ENCODE measurements at regions of chr2 and their contacts with region 1.

Region 1: DNA sequence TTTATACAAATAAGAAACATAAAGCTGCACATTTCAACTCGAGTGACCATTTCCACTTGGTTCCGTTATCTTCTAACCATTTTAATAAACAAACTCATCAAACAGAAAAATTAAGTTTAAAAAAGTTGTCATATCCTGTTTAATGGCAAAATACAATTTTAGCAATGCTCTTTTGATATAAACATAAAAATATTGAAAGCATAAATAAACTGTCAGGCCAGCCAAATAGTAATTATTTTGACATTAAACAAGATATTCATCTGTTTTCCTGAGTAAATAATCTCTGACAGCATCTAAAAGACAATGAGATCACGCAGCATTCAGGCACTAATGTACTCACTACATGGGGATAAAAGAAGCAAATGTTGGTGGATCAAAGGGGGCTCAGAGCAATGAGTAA is 145.3 kb upstream of the ATP5MC3 start:
- DNase-seq: no peak
- H3K4me3 Mint-ChIP-seq: no peak overlapping the region
- H3K27ac Mint-ChIP-seq: no peak overlapping the region
- H3K4me1 Mint-ChIP-seq: no peaks in the 10 kb centered on the region
- H3K27me3 Mint-ChIP-seq: no peaks in the 10 kb centered on the region
- CTCF ChIP-seq: no peak

Region 2: GRCh38 chr2:175309799-175310198 is 17.0 kb before region 1 on chr2:
- CTCF ChIA-PET with region 1: interaction called, 7 read pairs
- POLR2A ChIA-PET with region 1: no interaction called
- intact Hi-C with region 1: loop called (anchors 1 kb)
- DNase-seq: peak; percentile 47
- H3K4me3 Mint-ChIP-seq: no peak overlapping the region
- H3K27ac Mint-ChIP-seq: no peak overlapping the region
- H3K4me1 Mint-ChIP-seq: peaks cover 5% of the 10 kb centered on the region
- H3K27me3 Mint-ChIP-seq: peaks cover 75% of the 10 kb centered on the region
- CTCF ChIP-seq: peak; percentile 33

Measured in MCF 10A (cell line).